ENCODE measurements at regions of chr1 and their contacts with region 1.

Region 1: GRCh38 chr1:3796215-3797061 is at the start of gene LRRC47:
- DNase-seq: peak; percentile 91
- ATAC-seq: peak; percentile 99
- H3K4me3 Mint-ChIP-seq: peak within 1 kb of the TSS; percentile 95
- H3K27ac Mint-ChIP-seq: peak within 1 kb of the TSS; percentile 92
- H3K4me1 Mint-ChIP-seq: peaks cover 48% of the 10 kb centered on the region
- H3K27me3 Mint-ChIP-seq: peaks cover 5% of the 10 kb centered on the region
- CTCF ChIP-seq: no peak
- total RNA-seq, gene LRRC47: 40.3 and 43.3 TPM in 2 replicates

Region 2: DNA sequence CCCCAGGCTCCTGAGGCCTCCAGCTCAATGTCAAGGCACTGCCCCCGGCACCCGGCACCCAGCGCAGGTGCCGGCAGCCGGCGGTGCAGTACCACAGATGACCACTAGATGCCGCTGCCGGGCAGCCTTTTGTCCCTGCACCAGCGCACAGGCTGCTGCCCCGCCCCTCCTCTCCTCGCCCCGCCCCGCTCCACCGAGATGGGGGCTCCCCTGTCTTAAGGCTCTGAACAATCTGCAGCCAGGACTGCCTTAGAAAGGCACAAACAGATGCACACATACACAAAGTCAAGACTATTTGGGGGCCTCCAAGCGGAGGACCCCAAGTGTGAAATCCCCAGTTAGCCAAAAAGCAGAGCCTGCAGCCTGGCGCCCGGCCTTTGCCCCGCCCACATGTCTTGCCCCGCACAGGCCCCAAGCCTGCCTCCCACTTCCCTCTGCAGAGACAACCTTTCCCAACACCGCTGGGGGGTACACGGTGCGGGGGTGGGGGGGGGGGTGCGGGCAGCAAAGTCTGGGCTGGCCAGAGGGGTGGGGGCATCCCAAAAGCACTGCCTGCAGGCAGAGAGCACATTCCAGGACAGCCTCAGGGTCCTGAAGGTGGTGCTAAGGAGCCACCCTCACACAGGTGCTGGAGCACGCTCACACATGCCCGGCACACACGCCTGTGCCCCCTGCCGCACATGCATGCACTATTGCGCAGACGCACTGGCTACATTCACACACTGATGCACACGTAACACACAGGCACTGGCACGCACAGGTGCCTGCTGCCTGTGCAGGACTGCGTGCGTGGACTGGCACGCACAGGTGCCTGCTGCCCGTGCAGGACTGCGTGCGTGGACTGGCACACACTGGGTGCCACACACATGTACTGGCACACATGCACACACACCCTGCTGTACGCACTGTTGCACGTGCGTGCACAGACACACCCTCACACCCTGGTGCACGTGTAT is 304.9 kb before region 1 on chr1:
- CTCF ChIA-PET with region 1: no interaction called
- POLR2A ChIA-PET with region 1: no interaction called
- intact Hi-C with region 1: loop called (anchors 1 kb)
- DNase-seq: peak; percentile 89
- ATAC-seq: peak; percentile 98
- H3K4me3 Mint-ChIP-seq: peak overlapping the region; percentile 66
- H3K27ac Mint-ChIP-seq: no peak overlapping the region
- H3K4me1 Mint-ChIP-seq: peaks cover 6% of the 10 kb centered on the region
- H3K27me3 Mint-ChIP-seq: no peaks in the 10 kb centered on the region
- CTCF ChIP-seq: peak; percentile 93

Region 3: GRCh38 chr1:3624200-3625136 is 172.0 kb before region 1 on chr1 and contains the start of gene TPRG1L:
- CTCF ChIA-PET with region 1: interaction called, 4 read pairs
- POLR2A ChIA-PET with region 1: no interaction called
- intact Hi-C with region 1: loop called (anchors 1 kb)
- DNase-seq: peak; percentile 99
- ATAC-seq: peak; percentile 97
- H3K4me3 Mint-ChIP-seq: peak within 1 kb of the TSS; percentile 95
- H3K27ac Mint-ChIP-seq: peak within 1 kb of the TSS; percentile 82
- H3K4me1 Mint-ChIP-seq: peaks cover 46% of the 10 kb centered on the region
- H3K27me3 Mint-ChIP-seq: no peaks in the 10 kb centered on the region
- CTCF ChIP-seq: no peak
- total RNA-seq, gene TPRG1L: 26.5 and 27.0 TPM in 2 replicates

Region 4: DNA sequence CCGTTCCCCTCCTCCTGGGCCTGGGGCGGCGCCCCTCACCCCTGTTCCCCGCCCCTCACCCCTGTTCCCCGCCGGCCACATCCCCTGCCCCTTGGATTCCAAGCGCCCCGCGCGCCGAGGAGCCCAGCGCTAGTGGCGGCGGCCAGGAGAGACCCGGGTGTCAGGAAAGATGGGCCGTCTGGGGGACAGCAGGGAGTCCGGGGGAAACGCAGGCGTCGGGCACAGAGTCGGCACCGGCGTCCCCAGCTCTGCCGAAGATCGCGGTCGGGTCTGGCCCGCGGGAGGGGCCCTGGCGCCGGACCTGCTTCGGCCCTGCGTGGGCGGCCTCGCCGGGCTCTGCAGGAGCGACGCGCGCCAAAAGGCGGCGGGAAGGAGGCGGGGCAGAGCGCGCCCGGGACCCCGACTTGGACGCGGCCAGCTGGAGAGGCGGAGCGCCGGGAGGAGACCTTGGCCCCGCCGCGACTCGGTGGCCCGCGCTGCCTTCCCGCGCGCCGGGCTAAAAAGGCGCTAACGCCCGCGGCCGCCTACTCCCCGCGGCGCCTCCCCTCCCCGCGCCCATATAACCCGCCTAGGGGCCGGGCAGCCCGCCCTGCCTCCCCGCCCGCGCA is 144.4 kb before region 1 on chr1 and contains the start of gene TP73:
- CTCF ChIA-PET with region 1: no interaction called
- POLR2A ChIA-PET with region 1: no interaction called
- intact Hi-C with region 1: no loop called
- DNase-seq: no peak
- ATAC-seq: no peak
- H3K4me3 Mint-ChIP-seq: peak within 1 kb of the TSS; percentile 66
- H3K27ac Mint-ChIP-seq: peak within 1 kb of the TSS; percentile 18
- H3K4me1 Mint-ChIP-seq: peaks cover 46% of the 10 kb centered on the region
- H3K27me3 Mint-ChIP-seq: peaks cover 26% of the 10 kb centered on the region
- CTCF ChIP-seq: no peak
- total RNA-seq, gene TP73: 2.1 and 2.6 TPM in 2 replicates

Region 5: DNA sequence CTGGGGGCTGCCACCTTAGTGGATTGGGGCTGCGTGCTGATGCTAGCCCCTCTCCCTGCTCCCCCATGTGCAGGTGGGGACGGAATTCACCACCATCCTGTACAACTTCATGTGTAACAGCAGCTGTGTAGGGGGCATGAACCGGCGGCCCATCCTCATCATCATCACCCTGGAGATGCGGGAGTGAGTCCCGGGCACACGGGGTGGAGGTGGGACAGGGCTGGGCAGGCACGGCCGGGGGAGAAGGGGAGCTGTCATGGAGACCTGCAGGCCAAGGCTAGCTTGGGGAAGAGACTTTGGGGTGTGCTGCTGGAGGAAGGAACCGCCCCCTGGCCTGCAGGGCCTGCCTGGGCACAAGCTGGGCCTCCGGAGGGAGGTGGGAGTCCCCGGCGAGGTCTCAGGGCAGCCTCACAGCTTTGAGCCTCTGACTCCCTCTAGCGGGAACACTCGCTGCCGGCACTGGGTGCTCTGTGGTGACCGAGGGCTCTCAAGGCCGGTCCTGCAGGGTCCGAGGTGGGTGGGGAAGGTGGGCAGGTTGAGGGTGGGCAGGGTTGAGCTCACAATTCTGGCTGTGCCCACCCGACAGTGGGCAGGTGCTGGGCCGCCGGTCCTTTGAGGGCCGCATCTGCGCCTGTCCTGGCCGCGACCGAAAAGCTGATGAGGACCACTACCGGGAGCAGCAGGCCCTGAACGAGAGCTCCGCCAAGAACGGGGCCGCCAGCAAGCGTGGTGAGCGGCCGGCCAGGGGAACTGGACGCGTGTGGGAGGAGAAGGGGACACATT is 69.2 kb before region 1 on chr1:
- CTCF ChIA-PET with region 1: interaction called, 3 read pairs
- POLR2A ChIA-PET with region 1: no interaction called
- intact Hi-C with region 1: loop called (anchors 1 kb)
- DNase-seq: no peak
- ATAC-seq: peak; percentile 64
- H3K4me3 Mint-ChIP-seq: no peak overlapping the region
- H3K27ac Mint-ChIP-seq: no peak overlapping the region
- H3K4me1 Mint-ChIP-seq: peaks cover 4% of the 10 kb centered on the region
- H3K27me3 Mint-ChIP-seq: peaks cover 4% of the 10 kb centered on the region
- CTCF ChIP-seq: no peak

Region 6: DNA sequence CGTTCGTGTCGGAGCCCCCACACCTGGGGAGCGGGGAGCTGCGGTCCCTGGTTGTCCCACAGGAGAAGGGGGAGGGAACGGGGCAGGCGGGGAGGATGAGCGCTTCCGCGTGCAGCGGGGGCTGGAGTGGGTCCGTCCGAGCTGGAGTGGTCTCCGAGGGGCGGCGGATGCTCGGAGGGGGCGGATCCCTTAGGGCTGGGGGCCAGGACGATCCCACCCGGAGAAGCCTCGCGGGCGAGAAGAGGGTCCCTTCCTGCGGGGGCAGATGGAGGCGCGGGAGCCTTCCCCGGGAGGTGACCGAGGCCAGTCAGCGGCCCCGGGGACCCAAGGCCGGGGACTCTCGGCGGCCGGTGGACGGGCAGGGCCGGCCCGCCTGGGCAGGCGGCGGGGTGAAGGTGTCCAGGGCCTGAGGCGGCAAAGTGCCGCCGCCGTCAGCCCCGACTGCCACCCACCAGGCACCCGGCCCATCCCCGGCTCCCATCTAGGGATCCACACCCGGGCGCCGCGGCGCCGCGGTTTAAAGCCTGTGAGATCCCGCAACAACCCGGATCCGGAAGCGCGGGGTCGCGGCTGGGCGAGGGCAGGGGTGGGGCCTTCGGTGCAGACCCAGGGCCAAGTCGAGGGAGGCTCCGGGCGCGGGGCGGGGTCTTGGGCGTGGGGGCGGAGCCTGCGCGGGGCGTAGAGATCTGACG is 49.5 kb before region 1 on chr1:
- CTCF ChIA-PET with region 1: no interaction called
- POLR2A ChIA-PET with region 1: no interaction called
- intact Hi-C with region 1: loop called (anchors 1 kb)
- DNase-seq: peak; percentile 83
- ATAC-seq: peak; percentile 98
- H3K4me3 Mint-ChIP-seq: peak overlapping the region; percentile 82
- H3K27ac Mint-ChIP-seq: peak overlapping the region; percentile 61
- H3K4me1 Mint-ChIP-seq: peaks cover 29% of the 10 kb centered on the region
- H3K27me3 Mint-ChIP-seq: no peaks in the 10 kb centered on the region
- CTCF ChIP-seq: no peak

Region 7: GRCh38 chr1:3772027-3772714 is 24.3 kb before region 1 on chr1:
- CTCF ChIA-PET with region 1: interaction called, 7 read pairs
- POLR2A ChIA-PET with region 1: interaction called, 8 read pairs
- intact Hi-C with region 1: loop called (anchors 1 kb)
- DNase-seq: peak; percentile 87
- ATAC-seq: peak; percentile 89
- H3K4me3 Mint-ChIP-seq: peak overlapping the region; percentile 76
- H3K27ac Mint-ChIP-seq: no peak overlapping the region
- H3K4me1 Mint-ChIP-seq: peaks cover 18% of the 10 kb centered on the region
- H3K27me3 Mint-ChIP-seq: peaks cover 5% of the 10 kb centered on the region
- CTCF ChIP-seq: no peak

Region 8: GRCh38 chr1:3856908-3857790 is 60.7 kb after region 1 on chr1 and contains the starts of genes CEP104 and DFFB:
- CTCF ChIA-PET with region 1: no interaction called
- POLR2A ChIA-PET with region 1: interaction called, 5 read pairs
- intact Hi-C with region 1: loop called (anchors 1 kb)
- DNase-seq: peak; percentile 99
- ATAC-seq: peak; percentile 97
- H3K4me3 Mint-ChIP-seq: peak within 1 kb of the TSS; percentile 95
- H3K27ac Mint-ChIP-seq: peak within 1 kb of the TSS; percentile 86
- H3K4me1 Mint-ChIP-seq: peaks cover 31% of the 10 kb centered on the region
- H3K27me3 Mint-ChIP-seq: no peaks in the 10 kb centered on the region
- CTCF ChIP-seq: no peak
- total RNA-seq, gene CEP104: 38.0 and 45.1 TPM in 2 replicates
- total RNA-seq, gene DFFB: 9.3 and 10.5 TPM in 2 replicates